ENCODE measurements at regions of chr7 and their contacts with region 1.

Region 1: DNA sequence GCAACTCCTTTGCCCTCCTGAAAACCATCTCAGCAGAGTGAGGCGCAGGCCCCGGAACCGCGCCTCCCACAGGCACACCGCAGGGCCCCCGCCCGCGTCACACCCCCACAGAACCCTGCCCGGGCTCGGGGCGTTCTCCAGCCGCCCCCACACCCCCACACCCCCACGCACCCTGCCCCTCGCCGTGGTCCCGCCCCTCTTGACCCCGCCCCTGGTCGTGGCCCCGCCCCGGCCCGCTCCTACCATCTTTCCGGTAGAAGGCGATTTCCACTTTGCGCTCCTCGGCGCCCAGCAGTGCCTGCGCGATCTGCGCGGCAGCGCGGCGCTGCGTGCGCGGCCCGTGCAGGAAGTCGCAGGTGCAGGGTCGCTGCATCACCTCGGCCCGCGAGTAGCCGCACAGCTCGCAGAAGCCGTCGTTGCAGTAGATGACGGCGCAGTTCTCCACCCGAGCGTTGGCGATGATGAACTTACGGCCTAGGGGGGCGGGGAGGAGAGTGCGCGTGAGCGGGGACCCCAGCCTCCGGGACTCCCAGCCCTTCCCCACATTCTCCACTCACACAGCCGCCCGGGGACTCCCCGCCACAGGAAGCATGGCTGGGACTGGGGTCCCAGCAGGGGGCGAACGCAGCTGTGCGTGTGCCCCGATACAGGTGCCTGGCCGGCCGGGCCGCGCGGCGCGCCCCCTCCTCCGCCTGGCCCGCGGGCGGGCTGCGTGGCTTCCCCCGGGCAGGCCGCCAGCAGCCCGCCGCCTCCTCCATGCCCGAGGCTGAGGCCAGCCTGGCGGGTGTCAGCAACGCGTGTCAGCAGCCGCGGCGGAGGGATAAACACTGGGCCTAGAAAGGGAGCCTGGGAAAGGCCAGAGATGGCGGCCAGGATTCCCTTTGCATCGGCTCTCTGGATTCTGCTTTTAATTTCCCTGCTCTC is 3.4 kb downstream of the KCNH2 start:
- DNase-seq: peak; percentile 79 to 87 (median 83)
- H3K4me3 ChIP-seq: peak overlapping the region; percentile 36 to 51
- H3K4me3 Mint-ChIP-seq: peak overlapping the region; percentile 83 to 94 (median 88)
- H3K27ac ChIP-seq: peak overlapping the region; percentile 63
- H3K27ac Mint-ChIP-seq: peak overlapping the region; percentile 87 to 97 (median 95)
- H3K4me1 ChIP-seq: peaks cover 46% of the 10 kb centered on the region
- H3K4me1 Mint-ChIP-seq: peaks cover 18 to 54% (median 44%) of the 10 kb centered on the region in 4 donors
- H3K27me3 ChIP-seq: peaks cover 15% of the 10 kb centered on the region
- H3K27me3 Mint-ChIP-seq: peaks cover 6 to 17% of the 10 kb centered on the region in 2 donors

Region 2: DNA sequence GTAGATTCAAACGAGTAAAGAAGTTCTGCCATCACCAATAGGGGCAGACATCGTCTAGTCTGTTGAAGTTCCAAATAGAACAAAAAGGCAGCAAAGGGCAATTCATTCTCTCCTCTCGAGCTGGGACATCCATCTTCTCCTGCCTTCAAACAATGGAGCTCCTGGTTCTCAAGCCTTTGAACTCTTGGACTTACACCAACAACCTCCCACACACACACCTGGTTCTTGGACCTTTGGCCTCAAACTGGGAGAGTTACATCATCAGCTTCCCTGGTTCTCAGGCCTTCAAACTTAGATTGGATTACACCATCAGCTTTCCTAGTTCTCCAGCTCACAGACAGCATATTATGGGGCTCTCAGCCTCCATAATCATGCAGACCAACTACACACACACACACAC is 247.3 kb before region 1 on chr7:
- CTCF ChIA-PET with region 1: no interaction called
- POLR2A ChIA-PET with region 1: no interaction called
- intact Hi-C with region 1: no loop called
- DNase-seq: no peak
- H3K4me3 ChIP-seq: no peak overlapping the region
- H3K4me3 Mint-ChIP-seq: peak overlapping the region in 2 of 8 donors; percentile 31 to 51
- H3K27ac ChIP-seq: no peak overlapping the region
- H3K27ac Mint-ChIP-seq: peak overlapping the region in 4 of 7 donors; percentile 32 to 77 (median 62)
- H3K4me1 ChIP-seq: peaks cover 43% of the 10 kb centered on the region
- H3K4me1 Mint-ChIP-seq: peaks cover 43 to 71% (median 53%) of the 10 kb centered on the region in 4 donors
- H3K27me3 ChIP-seq: no peaks in the 10 kb centered on the region
- H3K27me3 Mint-ChIP-seq: no peaks in the 10 kb centered on the region

Region 3: DNA sequence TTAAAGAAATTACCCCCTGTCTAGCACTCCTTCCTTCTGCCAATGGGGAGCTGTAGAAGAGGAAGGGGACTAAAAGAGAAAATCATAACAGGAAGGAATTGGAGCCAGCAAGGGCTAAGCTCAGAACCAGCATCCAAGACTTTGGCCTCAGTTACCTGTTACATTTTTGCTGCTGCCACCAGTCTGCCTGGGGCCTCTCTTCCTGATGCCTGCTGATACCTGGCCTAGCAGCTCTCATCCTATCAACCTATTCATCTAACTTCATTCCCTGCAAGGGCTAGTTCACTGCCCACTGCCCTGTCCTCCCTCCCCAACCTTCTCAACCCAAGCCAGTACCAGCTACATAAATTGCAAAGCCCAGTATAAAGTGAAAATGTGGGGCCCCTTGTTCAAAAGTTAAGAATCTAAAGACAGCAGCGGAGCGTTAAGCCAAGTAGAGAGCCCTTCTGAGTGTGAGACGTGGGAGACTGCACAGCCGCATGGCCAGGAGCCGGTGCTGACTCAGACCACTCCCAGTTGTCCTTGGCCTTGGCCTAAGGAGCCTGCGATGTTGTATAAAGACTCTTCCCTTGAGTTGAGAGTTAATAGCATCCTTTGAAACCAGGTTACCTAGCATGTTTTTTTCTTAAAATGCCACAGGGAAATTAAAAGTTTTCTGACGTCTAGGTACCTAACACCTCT is 135.6 kb before region 1 on chr7:
- CTCF ChIA-PET with region 1: no interaction called
- POLR2A ChIA-PET with region 1: no interaction called
- intact Hi-C with region 1: no loop called
- DNase-seq: no peak
- H3K4me3 ChIP-seq: no peak overlapping the region
- H3K4me3 Mint-ChIP-seq: no peak overlapping the region
- H3K27ac ChIP-seq: no peak overlapping the region
- H3K27ac Mint-ChIP-seq: no peak overlapping the region
- H3K4me1 ChIP-seq: no peaks in the 10 kb centered on the region
- H3K4me1 Mint-ChIP-seq: no peaks in the 10 kb centered on the region
- H3K27me3 ChIP-seq: no peaks in the 10 kb centered on the region
- H3K27me3 Mint-ChIP-seq: peaks cover 0 to 2% of the 10 kb centered on the region in 2 donors

Region 4: DNA sequence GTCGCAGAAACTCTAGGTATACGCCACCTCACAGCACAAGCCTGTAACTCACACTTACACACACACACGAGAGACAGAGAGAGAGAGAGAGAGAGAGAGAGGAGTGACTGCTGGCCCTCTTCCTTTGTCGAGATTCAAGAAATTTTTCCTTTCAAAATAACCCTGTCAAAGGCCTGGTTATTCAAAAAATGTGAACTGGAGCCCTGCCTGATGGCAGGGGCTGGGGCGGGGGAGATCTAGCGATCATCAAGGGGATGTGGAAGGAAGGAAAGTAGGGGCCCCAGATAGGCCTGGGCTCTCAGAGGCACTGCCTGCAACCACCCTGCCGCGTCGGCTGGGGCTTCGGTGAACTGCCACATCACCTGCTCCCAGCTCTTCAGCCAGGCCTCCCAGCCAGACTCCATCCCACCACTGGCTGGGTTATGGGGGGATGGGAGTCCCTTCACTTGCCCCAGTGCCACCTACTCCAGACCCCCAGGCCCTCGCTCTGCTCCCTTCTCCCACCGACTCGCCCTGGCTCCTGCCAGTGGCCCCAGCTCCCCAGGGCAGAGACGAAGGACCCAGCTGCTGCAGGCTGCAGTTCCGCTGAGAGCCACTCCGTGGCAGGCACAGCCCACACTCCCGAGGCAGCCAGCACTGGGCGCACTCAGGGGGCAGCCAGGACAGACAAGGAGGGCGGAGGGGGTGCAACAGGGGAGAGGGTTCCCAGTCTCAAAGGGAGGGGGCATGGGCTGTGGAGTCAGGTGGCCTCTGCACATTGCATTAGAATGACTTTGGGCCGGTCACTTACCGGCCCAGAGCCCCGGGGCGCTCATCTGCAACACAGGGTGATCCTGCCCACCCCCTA is 12.0 kb before region 1 on chr7:
- CTCF ChIA-PET with region 1: interaction called, 21 read pairs
- POLR2A ChIA-PET with region 1: interaction called, 10 read pairs
- intact Hi-C with region 1: no loop called
- DNase-seq: peak in 4 of 5 donors; percentile 58 to 63 (median 62)
- H3K4me3 ChIP-seq: no peak overlapping the region
- H3K4me3 Mint-ChIP-seq: no peak overlapping the region
- H3K27ac ChIP-seq: no peak overlapping the region
- H3K27ac Mint-ChIP-seq: no peak overlapping the region
- H3K4me1 ChIP-seq: peaks cover 21% of the 10 kb centered on the region
- H3K4me1 Mint-ChIP-seq: peaks cover 6 to 15% (median 9%) of the 10 kb centered on the region in 4 donors
- H3K27me3 ChIP-seq: no peaks in the 10 kb centered on the region
- H3K27me3 Mint-ChIP-seq: peaks cover 12 to 13% of the 10 kb centered on the region in 2 donors

Region 5: GRCh38 chr7:150988230-150989226 is 13.8 kb after region 1 on chr7:
- CTCF ChIA-PET with region 1: interaction called, 27 read pairs
- POLR2A ChIA-PET with region 1: interaction called, 31 read pairs
- intact Hi-C with region 1: loop called (anchors 1 kb)
- DNase-seq: peak; percentile 53 to 72 (median 70)
- H3K4me3 ChIP-seq: peak overlapping the region in 1 of 2 donors; percentile 47
- H3K4me3 Mint-ChIP-seq: peak overlapping the region; percentile 55 to 85 (median 75)
- H3K27ac ChIP-seq: no peak overlapping the region
- H3K27ac Mint-ChIP-seq: peak overlapping the region; percentile 23 to 95 (median 83)
- H3K4me1 ChIP-seq: peaks cover 35% of the 10 kb centered on the region
- H3K4me1 Mint-ChIP-seq: peaks cover 18 to 50% (median 31%) of the 10 kb centered on the region in 4 donors
- H3K27me3 ChIP-seq: no peaks in the 10 kb centered on the region
- H3K27me3 Mint-ChIP-seq: no peaks in the 10 kb centered on the region

Region 6: GRCh38 chr7:151062399-151063211 is 87.9 kb after region 1 on chr7:
- CTCF ChIA-PET with region 1: no interaction called
- POLR2A ChIA-PET with region 1: no interaction called
- intact Hi-C with region 1: no loop called
- DNase-seq: no peak
- H3K4me3 ChIP-seq: no peak overlapping the region
- H3K4me3 Mint-ChIP-seq: no peak overlapping the region
- H3K27ac ChIP-seq: no peak overlapping the region
- H3K27ac Mint-ChIP-seq: no peak overlapping the region
- H3K4me1 ChIP-seq: peaks cover 30% of the 10 kb centered on the region
- H3K4me1 Mint-ChIP-seq: peaks cover 11 to 36% (median 24%) of the 10 kb centered on the region in 4 donors
- H3K27me3 ChIP-seq: no peaks in the 10 kb centered on the region
- H3K27me3 Mint-ChIP-seq: peaks cover 0 to 2% of the 10 kb centered on the region in 2 donors

Region 7: DNA sequence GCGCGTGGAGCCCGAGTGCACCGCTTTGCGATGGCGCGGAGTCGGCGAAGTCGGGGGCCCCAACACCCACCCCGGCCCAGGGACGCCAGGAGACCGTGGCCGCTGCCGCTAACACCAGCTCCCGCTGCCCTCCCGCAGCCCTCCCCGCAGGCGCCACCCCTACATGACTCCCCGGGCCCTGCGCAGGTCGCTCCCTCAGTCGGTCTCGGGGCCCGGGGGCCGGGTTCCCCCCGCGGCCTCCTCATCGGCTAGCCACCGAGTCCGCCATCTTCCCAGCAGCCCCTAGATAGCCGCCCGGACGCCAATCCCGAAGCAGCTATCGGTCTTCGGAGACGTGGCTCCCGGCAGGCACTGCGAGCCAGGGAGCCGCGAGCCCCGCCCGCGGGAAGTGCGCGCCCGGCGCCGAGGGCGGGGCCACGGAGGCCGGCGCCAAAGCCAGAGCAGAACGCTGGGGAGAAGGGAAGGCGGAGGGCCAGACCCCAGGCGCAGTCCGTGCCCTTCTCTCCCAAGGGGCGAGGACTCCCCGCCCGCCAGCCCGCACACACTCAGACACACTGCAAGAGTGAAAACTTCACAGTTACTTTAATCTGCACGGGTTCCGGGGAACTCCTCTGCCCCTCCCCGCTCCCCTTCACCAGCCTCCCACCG is 105.9 kb after region 1 on chr7 and contains the start of gene FASTK:
- CTCF ChIA-PET with region 1: no interaction called
- POLR2A ChIA-PET with region 1: interaction called, 5 read pairs
- intact Hi-C with region 1: loop called (anchors 10 kb)
- DNase-seq: peak; percentile 86 to 92 (median 89)
- H3K4me3 ChIP-seq: peak within 1 kb of the TSS; percentile 91 to 93
- H3K4me3 Mint-ChIP-seq: peak within 1 kb of the TSS; percentile 85 to 92 (median 89)
- H3K27ac ChIP-seq: peak within 1 kb of the TSS; percentile 90
- H3K27ac Mint-ChIP-seq: peak within 1 kb of the TSS; percentile 72 to 97 (median 91)
- H3K4me1 ChIP-seq: peaks cover 52% of the 10 kb centered on the region
- H3K4me1 Mint-ChIP-seq: peaks cover 23 to 57% (median 36%) of the 10 kb centered on the region in 4 donors
- H3K27me3 ChIP-seq: no peaks in the 10 kb centered on the region
- H3K27me3 Mint-ChIP-seq: no peaks in the 10 kb centered on the region
- total RNA-seq, gene FASTK: 123 to 126 TPM